ENCODE measurements at regions of chr6 and their contacts with region 1.

Region 1: GRCh38 chr6:137415127-137415833 is 78.9 kb downstream of the OLIG3 start:
- DNase-seq: peak; percentile 54
- H3K4me3 Mint-ChIP-seq: peak overlapping the region; percentile 76
- H3K27ac Mint-ChIP-seq: no peak overlapping the region
- H3K4me1 Mint-ChIP-seq: peaks cover 10% of the 10 kb centered on the region
- H3K27me3 Mint-ChIP-seq: peaks cover 34% of the 10 kb centered on the region

Region 2: GRCh38 chr6:137271245-137272183 is 143.8 kb before region 1 on chr6:
- intact Hi-C with region 1: loop called (anchors 1 kb)
- DNase-seq: no peak
- H3K4me3 Mint-ChIP-seq: no peak overlapping the region
- H3K27ac Mint-ChIP-seq: no peak overlapping the region
- H3K4me1 Mint-ChIP-seq: peaks cover 6% of the 10 kb centered on the region
- H3K27me3 Mint-ChIP-seq: peaks cover 33% of the 10 kb centered on the region

Region 3: GRCh38 chr6:137341681-137342195 is 73.5 kb before region 1 on chr6:
- intact Hi-C with region 1: loop called (anchors 1 kb)
- DNase-seq: no peak
- H3K4me3 Mint-ChIP-seq: peak overlapping the region; percentile 28
- H3K27ac Mint-ChIP-seq: no peak overlapping the region
- H3K4me1 Mint-ChIP-seq: peaks cover 18% of the 10 kb centered on the region
- H3K27me3 Mint-ChIP-seq: peaks cover 30% of the 10 kb centered on the region

Region 4: DNA sequence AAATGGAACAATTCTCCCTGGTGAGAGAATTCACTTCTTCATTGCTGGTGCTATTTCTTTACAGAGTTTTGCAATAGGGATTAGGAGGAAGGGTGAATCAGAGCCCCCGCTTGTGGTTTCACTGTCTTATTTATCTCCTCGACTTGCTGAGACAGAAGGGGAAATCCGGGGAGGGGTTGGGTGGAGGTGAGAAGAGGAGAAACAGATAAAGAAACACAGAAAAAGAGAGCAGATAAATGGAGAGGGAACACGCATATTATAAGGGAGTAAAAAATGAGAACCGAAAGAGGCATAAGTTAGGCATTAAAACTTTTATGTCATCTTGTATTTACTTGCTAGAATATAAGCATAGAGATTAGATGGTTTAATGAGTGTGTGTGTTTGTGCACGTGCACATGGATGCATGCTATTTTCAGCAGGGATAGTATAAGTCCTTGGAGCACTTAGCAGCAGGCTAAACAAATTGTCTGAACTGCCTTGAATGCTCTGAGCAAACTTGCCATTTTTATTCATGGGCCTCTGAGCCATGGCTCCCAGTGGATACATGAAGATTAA is 26.1 kb before region 1 on chr6:
- intact Hi-C with region 1: loop called (anchors 2 kb)
- DNase-seq: peak; percentile 61
- H3K4me3 Mint-ChIP-seq: peak overlapping the region; percentile 15
- H3K27ac Mint-ChIP-seq: peak overlapping the region; percentile 31
- H3K4me1 Mint-ChIP-seq: peaks cover 23% of the 10 kb centered on the region
- H3K27me3 Mint-ChIP-seq: no peaks in the 10 kb centered on the region